Spleen (tissue), 13 donors: ENCODE measurements at regions of chr3 and their contacts with region 1.

Region 1: GRCh38 chr3:32667122-32667521 is 17.9 kb upstream of the CNOT10 start:
- DNase-seq: no peak
- H3K4me3 ChIP-seq: no peak overlapping the region
- H3K27ac ChIP-seq: no peak overlapping the region
- H3K4me1 ChIP-seq: peaks cover 0 to 8% (median 0%) of the 10 kb centered on the region in 6 donors
- H3K27me3 ChIP-seq: no peaks in the 10 kb centered on the region
- CTCF ChIP-seq: no peak
- POLR2A ChIP-seq: no peak

Region 2: GRCh38 chr3:32302601-32303398 is 364.3 kb before region 1 on chr3:
- intact Hi-C with region 1: loop called (anchors 10 kb)
- DNase-seq: no peak
- H3K4me3 ChIP-seq: no peak overlapping the region
- H3K27ac ChIP-seq: peak overlapping the region; percentile 19 to 73 (median 61)
- H3K4me1 ChIP-seq: peaks cover 0 to 23% (median 1%) of the 10 kb centered on the region in 6 donors
- H3K27me3 ChIP-seq: no peaks in the 10 kb centered on the region
- CTCF ChIP-seq: no peak
- POLR2A ChIP-seq: no peak

Region 3: GRCh38 chr3:32510075-32510724 is 156.9 kb before region 1 on chr3:
- intact Hi-C with region 1: loop called (anchors 2 kb)
- DNase-seq: no peak
- H3K4me3 ChIP-seq: no peak overlapping the region
- H3K27ac ChIP-seq: no peak overlapping the region
- H3K4me1 ChIP-seq: peaks cover 0 to 6% (median 0%) of the 10 kb centered on the region in 6 donors
- H3K27me3 ChIP-seq: no peaks in the 10 kb centered on the region
- CTCF ChIP-seq: peak; percentile 48 to 85 (median 73)
- POLR2A ChIP-seq: no peak